ENCODE measurements at regions of chr11 and their contacts with region 1.

Region 1: DNA sequence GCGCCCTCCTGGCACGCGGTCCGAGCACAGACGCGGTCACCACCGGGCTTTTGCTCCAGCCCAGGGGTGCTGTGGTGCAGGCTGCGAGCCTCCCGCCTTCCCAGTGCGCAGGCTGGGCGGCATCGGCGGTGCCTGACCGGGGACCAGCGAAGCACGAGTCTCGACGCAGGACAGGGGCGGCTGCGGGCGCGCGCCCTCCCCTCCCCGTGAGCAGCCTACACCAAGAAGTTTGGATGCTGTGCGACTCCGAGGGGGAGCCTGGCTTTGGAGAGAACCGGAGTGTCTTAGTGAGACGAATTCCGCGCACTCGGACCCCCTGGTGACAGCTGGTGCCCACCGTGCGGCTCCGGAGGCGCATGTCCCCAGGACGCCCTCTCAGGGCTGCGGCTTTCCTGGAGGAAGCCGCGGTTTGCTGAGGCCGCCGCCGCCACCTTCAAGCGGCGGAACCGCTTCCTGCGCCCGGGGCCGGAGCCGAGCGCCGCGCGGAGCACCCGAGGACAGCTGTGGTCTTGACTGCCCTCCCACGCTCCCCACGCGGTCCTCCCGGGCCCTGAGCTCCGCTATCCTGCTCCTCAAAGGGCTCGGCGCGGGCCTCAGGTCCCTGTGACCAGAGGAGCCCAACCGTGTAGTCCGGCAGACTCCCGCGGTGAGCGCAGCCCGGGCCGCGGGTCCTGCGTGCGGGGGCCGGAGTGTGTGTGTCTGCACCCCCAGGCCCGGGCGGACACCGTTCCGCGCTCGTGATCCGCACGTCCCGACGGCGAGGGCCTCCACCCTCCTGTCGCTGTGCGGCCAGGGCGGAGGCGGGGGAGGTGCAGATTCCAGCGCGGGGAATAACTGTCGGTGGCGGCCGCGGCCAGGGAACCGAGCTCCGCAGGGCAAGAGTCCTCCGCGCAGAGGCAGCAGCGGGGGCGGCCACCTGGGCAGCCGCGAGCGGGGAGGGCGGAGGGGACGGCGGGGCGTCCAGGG is 1.7 kb downstream of the FGF3 start:
- DNase-seq: no peak
- H3K4me3 Mint-ChIP-seq: no peak overlapping the region
- H3K27ac Mint-ChIP-seq: no peak overlapping the region
- H3K4me1 Mint-ChIP-seq: no peaks in the 10 kb centered on the region
- H3K27me3 Mint-ChIP-seq: peaks cover 44% of the 10 kb centered on the region

Region 2: GRCh38 chr11:69280994-69281393 is 536.6 kb before region 1 on chr11:
- CTCF ChIA-PET with region 1: no interaction called
- POLR2A ChIA-PET with region 1: no interaction called
- intact Hi-C with region 1: no loop called
- DNase-seq: no peak
- H3K4me3 Mint-ChIP-seq: no peak overlapping the region
- H3K27ac Mint-ChIP-seq: no peak overlapping the region
- H3K4me1 Mint-ChIP-seq: no peaks in the 10 kb centered on the region
- H3K27me3 Mint-ChIP-seq: peaks cover 3% of the 10 kb centered on the region

Region 3: GRCh38 chr11:69704508-69705253 is 112.9 kb before region 1 on chr11:
- CTCF ChIA-PET with region 1: no interaction called
- POLR2A ChIA-PET with region 1: no interaction called
- intact Hi-C with region 1: loop called (anchors 10 kb)
- DNase-seq: no peak
- H3K4me3 Mint-ChIP-seq: no peak overlapping the region
- H3K27ac Mint-ChIP-seq: no peak overlapping the region
- H3K4me1 Mint-ChIP-seq: peaks cover 9% of the 10 kb centered on the region
- H3K27me3 Mint-ChIP-seq: peaks cover 37% of the 10 kb centered on the region